ENCODE measurements at regions of chr2 and their contacts with region 1.

Region 1: GRCh38 chr2:169131587-169132512 is 62.5 kb downstream of the DHRS9 start:
- DNase-seq: no peak
- H3K4me3 ChIP-seq: no peak overlapping the region
- CTCF ChIP-seq: peak; percentile 56

Region 2: GRCh38 chr2:168961450-168962229 is 170.2 kb before region 1 on chr2:
- CTCF ChIA-PET with region 1: interaction called, 20 read pairs
- POLR2A ChIA-PET with region 1: no interaction called
- DNase-seq: peak; percentile 33
- H3K4me3 ChIP-seq: no peak overlapping the region
- CTCF ChIP-seq: peak; percentile 80

Region 3: DNA sequence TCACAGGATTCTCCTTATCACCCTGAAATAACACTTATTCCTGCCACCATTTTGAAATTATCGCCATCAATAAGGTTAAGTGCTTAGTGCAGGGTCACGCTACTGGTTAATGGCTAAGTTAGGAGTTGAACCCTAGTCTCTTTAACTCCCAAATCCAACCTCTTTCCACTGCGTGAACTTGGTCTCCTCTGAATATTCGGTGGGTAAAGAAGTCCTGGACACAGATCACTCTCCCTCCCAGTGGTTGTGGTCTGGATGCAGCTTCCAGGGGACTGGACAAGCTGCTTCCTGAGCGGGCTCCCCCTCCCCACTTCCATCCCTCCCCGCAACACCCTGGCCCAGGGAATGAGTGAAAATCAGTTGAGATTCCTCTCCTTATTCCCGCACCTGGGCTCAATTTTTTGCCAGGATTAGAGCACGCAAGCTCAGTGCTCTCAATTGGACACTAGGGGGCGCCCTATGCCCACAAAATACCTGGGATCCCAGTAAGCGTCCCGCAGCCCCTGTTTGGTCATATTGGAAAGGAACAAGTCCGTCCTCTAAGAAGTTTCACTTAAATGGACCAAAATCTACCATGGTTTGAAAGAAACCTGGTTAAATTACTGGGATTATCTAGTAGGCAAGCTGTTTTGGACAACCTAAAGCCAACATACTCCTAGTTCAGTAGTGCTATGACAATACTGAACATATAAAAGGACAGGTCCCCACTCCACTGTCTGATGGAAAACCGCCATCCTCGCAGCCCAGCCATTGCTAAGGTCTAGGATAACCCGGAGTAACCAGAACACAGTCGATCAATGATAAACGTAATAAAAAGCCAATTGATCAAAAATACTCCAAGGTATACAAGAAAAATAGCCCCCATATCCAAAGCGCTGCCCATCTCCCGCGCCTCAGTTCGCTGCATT is 22.1 kb before region 1 on chr2:
- CTCF ChIA-PET with region 1: interaction called, 53 read pairs
- POLR2A ChIA-PET with region 1: no interaction called
- DNase-seq: peak; percentile 21
- H3K4me3 ChIP-seq: no peak overlapping the region
- CTCF ChIP-seq: peak; percentile 77

Measured in AG04449 (cell line).